Activated CD8-positive, alpha-beta T cell treated with anti-CD3 and anti-CD28 coated beads, Interleukin-2, amount 10 ng/mL, durations not matched to agents 7 days and 5 days (primary cell): ENCODE measurements at regions of chr1 and their contacts with region 1.

Region 1: GRCh38 chr1:231757101-231757404 is 130.5 kb downstream of the DISC1 start:
- DNase-seq: no peak
- ATAC-seq: no peak
- H3K4me3 Mint-ChIP-seq: no peak overlapping the region
- H3K27ac Mint-ChIP-seq: no peak overlapping the region
- H3K4me1 Mint-ChIP-seq: no peaks in the 10 kb centered on the region
- H3K27me3 Mint-ChIP-seq: no peaks in the 10 kb centered on the region

Region 2: GRCh38 chr1:231770506-231771175 is 13.6 kb after region 1 on chr1:
- CTCF ChIA-PET with region 1: interaction called, 38 read pairs
- POLR2A ChIA-PET with region 1: no interaction called
- DNase-seq: no peak
- ATAC-seq: no peak
- H3K4me3 Mint-ChIP-seq: no peak overlapping the region
- H3K27ac Mint-ChIP-seq: no peak overlapping the region
- H3K4me1 Mint-ChIP-seq: no peaks in the 10 kb centered on the region
- H3K27me3 Mint-ChIP-seq: no peaks in the 10 kb centered on the region

Region 3: DNA sequence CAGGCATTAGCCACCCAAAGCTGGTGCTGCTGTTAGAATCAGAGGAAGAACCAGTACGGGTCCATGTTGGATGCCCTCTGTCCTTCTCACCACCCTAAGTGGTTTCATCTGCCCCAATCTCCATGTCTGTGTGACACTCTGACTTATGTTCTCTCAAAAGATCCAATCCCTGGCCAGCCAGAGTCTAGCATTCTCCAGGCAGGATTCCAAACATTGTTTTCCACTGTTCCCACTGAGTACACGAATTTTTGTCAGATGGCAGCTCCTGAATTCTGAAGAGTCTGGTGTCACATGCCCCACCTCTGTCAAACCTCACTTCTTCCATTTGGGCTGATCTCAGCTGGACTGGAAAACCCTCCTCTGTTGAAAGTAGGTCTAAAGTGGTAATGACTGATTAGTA is 35.6 kb after region 1 on chr1:
- CTCF ChIA-PET with region 1: no interaction called
- POLR2A ChIA-PET with region 1: no interaction called
- DNase-seq: no peak
- ATAC-seq: no peak
- H3K4me3 Mint-ChIP-seq: no peak overlapping the region
- H3K27ac Mint-ChIP-seq: no peak overlapping the region
- H3K4me1 Mint-ChIP-seq: no peaks in the 10 kb centered on the region
- H3K27me3 Mint-ChIP-seq: no peaks in the 10 kb centered on the region

Region 4: DNA sequence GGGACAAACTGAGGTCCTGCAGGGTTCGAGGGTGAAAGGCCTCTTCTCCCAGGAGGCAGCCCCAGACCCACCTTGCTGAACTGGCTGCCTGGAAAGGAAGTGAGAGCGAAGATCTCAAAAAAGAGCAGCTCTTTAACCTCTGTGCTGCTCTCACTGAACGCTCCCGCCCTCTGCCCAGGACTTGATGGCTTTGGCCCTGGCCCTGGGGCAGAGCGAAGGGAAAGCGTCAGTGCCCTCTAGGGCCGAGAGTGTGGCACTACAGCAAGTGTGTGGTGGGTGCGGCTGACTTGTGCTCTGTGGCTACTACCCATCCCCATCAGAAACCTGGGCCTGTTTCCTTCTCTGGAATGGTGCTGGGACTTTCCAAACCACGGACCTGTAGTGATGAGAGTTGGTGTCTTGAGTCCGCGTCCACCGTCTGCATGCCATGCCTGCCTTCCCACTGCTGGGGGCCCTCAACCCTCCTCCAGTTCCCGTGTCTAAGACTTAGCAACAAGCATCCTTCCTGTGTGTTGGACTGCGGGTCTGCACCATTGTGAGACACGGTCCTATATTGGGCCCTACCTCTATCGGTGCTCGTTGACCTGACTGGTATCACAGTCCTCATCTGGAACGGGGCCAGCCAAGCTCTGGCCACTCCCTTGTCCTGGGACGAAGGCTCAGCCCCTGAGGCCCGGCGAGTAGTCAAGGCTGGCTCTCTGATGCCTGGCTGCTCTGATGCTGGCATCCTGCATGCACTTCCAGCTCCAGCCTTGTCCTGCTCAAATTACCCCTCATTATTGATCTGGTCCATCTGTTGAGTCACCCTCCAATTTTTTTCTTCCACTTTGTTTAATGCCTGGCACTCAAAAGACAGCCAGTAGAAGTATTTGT is 49.8 kb after region 1 on chr1:
- CTCF ChIA-PET with region 1: interaction called, 12 read pairs
- POLR2A ChIA-PET with region 1: no interaction called
- DNase-seq: peak; percentile 44
- ATAC-seq: peak; percentile 82
- H3K4me3 Mint-ChIP-seq: no peak overlapping the region
- H3K27ac Mint-ChIP-seq: no peak overlapping the region
- H3K4me1 Mint-ChIP-seq: no peaks in the 10 kb centered on the region
- H3K27me3 Mint-ChIP-seq: no peaks in the 10 kb centered on the region